H1 (cell line): ENCODE measurements at regions of chr12 and their contacts with region 1.

Region 1: DNA sequence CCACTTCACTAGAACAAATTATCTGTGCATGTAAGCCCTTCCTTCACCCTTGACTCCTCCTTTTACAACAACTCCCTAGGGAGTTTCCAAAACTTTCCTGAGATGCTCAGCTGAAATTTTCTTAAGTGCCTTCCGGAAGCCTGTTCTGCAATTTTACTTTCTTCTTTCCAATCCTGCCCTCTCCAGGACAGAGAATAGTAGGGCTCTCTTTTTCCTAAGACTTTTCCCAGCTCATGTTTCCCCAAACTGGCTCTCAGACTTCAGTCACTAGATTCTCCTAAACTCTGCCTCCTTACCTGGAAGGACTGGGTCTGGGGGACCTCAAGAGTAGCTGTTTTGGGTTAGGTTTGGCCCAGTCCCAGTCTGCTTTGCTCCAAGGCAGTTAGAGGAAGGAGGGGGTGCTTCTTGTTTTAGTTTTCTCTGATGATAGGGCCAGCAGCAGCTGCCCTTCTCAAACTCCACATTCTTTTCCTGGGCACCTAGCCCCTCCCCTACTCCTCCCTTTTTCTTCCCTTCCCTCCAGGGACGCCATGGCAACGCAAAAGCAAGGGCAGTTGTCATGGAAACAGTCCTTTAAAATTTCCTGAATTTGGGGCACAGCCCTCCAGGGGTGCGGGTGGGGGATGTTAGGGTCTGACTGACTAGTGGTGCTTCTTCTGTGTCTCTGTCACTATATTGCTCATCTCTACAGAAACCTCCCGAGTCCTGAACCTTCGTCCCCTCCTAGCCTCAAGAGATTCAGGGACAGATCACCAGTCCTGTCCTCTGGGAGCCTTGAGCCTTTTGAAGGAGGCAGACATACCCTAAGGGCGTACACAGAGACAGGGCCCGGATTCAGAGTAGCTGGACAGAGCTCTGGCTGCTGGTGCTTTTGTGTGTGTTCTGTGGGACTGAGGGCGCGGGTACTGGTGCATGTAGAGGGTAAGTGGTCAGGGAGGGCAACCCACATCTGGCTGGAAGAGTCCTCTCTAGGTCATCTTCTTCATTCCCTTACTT is 17.0 kb downstream of the PPP1R1A start:
- DNase-seq: peak in 1 of 2 experiments; percentile 64
- H3K4me3 ChIP-seq: peak overlapping the region in 1 of 4 experiments; percentile 15; a peak in 1 of 8 replicates
- H3K27ac ChIP-seq: no peak overlapping the region
- H3K4me1 ChIP-seq: peaks cover 6 to 16% (median 8%) of the 10 kb centered on the region in 4 experiments; a peak in 6 of 7 replicates
- H3K27me3 ChIP-seq: peaks cover 0 to 3% (median under 1%) of the 10 kb centered on the region in 4 experiments; a peak in 3 of 7 replicates
- CTCF ChIP-seq: peak in 2 of 3 experiments; percentile 35 to 60; a peak in 3 of 4 replicates
- EP300 ChIP-seq: no peak
- POLR2A ChIP-seq: no peak
- RAD21 ChIP-seq: peak; percentile 68 to 74

Region 2: GRCh38 chr12:54448344-54448743 is 123.1 kb before region 1 on chr12:
- CTCF ChIA-PET with region 1: no interaction called
- POLR2A ChIA-PET with region 1: no interaction called
- DNase-seq: no peak
- H3K4me3 ChIP-seq: no peak overlapping the region
- H3K27ac ChIP-seq: no peak overlapping the region
- H3K4me1 ChIP-seq: no peaks in the 10 kb centered on the region
- H3K27me3 ChIP-seq: peaks cover 57 to 89% (median 76%) of the 10 kb centered on the region in 4 experiments
- CTCF ChIP-seq: no peak
- EP300 ChIP-seq: no peak
- POLR2A ChIP-seq: no peak
- RAD21 ChIP-seq: no peak

Region 3: GRCh38 chr12:54541751-54542290 is 29.7 kb before region 1 on chr12:
- CTCF ChIA-PET with region 1: interaction called, 37 read pairs
- POLR2A ChIA-PET with region 1: interaction called, 3 read pairs
- DNase-seq: no peak
- H3K4me3 ChIP-seq: no peak overlapping the region
- H3K27ac ChIP-seq: no peak overlapping the region
- H3K4me1 ChIP-seq: peaks cover 0 to 9% (median 3%) of the 10 kb centered on the region in 4 experiments; a peak in 4 of 7 replicates
- H3K27me3 ChIP-seq: peaks cover 0 to 7% (median 3%) of the 10 kb centered on the region in 4 experiments; a peak in 4 of 7 replicates
- CTCF ChIP-seq: no peak
- EP300 ChIP-seq: no peak
- POLR2A ChIP-seq: no peak
- RAD21 ChIP-seq: no peak

Region 4: DNA sequence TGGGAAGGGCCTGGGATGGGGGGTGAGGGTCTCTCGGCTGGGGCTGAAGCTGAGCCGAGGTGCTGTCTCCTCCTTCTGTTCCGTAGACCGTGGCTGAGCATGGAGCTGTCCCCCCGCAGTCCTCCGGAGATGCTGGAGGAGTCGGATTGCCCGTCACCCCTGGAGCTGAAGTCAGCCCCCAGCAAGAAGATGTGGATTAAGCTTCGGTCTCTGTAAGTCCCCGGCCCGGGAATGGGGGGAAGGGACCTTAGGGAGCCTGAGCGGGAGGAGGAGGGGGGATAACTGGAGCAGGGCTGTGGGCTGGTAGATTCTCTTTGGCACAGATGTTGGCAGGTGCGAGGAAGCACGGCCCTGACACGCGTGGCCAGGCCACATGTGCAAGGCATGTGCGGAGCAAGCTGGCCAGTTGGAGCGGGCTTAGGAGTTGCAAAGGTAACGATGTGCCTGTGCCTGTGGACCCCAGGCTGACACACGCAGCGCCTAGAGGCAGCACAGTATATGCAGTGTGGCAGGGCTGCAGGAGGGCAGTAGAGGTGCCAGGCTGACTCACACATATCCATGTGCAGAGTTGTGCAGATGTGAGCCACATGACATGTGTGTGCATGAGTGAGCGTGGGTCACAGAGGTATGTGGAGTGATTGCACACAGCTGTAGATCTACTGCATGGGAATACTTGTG is 21.6 kb before region 1 on chr12:
- CTCF ChIA-PET with region 1: interaction called, 55 read pairs
- POLR2A ChIA-PET with region 1: interaction called, 4 read pairs
- DNase-seq: no peak
- H3K4me3 ChIP-seq: peak overlapping the region; percentile 29 to 77 (median 64)
- H3K27ac ChIP-seq: no peak overlapping the region
- H3K4me1 ChIP-seq: peaks cover 2 to 15% (median 10%) of the 10 kb centered on the region in 4 experiments
- H3K27me3 ChIP-seq: peaks cover 17 to 75% (median 57%) of the 10 kb centered on the region in 4 experiments
- CTCF ChIP-seq: no peak
- EP300 ChIP-seq: no peak
- POLR2A ChIP-seq: no peak
- RAD21 ChIP-seq: no peak

Region 5: DNA sequence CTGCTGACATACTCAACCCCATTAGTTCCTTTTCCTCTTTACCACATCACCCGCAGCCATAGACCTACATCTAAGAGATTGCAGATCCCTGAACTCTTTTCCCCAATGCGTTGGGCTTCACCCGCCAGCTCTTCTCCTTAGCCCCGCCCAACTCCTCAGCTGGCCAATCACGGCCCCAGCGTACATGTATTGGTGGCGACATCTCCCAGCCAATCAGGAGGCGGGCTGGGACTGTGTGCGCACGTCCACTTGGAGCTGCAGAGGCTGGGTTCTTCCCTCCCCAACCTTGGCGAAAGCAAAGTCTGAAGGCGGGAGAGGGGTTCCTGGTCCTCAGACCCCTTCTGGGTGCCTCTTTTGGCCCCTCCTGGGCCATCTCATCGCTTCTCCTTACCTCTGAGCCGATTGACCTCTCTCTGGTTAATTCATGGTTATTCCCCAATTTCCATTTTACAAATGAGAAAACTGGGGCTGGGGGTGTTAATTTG is 11.1 kb before region 1 on chr12:
- CTCF ChIA-PET with region 1: interaction called, 55 read pairs
- POLR2A ChIA-PET with region 1: interaction called, 3 read pairs
- DNase-seq: peak; percentile 61 to 88
- H3K4me3 ChIP-seq: peak overlapping the region; percentile 19 to 57 (median 26); a peak in 7 of 8 replicates
- H3K27ac ChIP-seq: no peak overlapping the region
- H3K4me1 ChIP-seq: peaks cover 0 to 7% (median 5%) of the 10 kb centered on the region in 4 experiments; a peak in 5 of 7 replicates
- H3K27me3 ChIP-seq: peaks cover 19 to 69% (median 54%) of the 10 kb centered on the region in 4 experiments
- CTCF ChIP-seq: no peak
- EP300 ChIP-seq: no peak
- POLR2A ChIP-seq: 0 out of 3 replicates have a peak, but pooled peaks of 1 of the 2 experiments have one; percentile 12
- RAD21 ChIP-seq: no peak

Region 6: GRCh38 chr12:54680374-54680773 is 108.9 kb after region 1 on chr12:
- CTCF ChIA-PET with region 1: interaction called, 10 read pairs
- POLR2A ChIA-PET with region 1: no interaction called
- DNase-seq: peak; percentile 25 to 90
- H3K4me3 ChIP-seq: no peak overlapping the region
- H3K27ac ChIP-seq: no peak overlapping the region
- H3K4me1 ChIP-seq: peaks cover 12 to 23% (median 20%) of the 10 kb centered on the region in 4 experiments
- H3K27me3 ChIP-seq: no peaks in the 10 kb centered on the region; a peak in 1 of 7 replicates
- CTCF ChIP-seq: peak; percentile 46 to 92 (median 83)
- EP300 ChIP-seq: no peak
- POLR2A ChIP-seq: no peak
- RAD21 ChIP-seq: peak; percentile 21 to 37; a peak in 3 of 4 replicates